Aorta (tissue), 5 donors: ENCODE measurements at regions of chr13 and their contacts with region 1.

Region 1: DNA sequence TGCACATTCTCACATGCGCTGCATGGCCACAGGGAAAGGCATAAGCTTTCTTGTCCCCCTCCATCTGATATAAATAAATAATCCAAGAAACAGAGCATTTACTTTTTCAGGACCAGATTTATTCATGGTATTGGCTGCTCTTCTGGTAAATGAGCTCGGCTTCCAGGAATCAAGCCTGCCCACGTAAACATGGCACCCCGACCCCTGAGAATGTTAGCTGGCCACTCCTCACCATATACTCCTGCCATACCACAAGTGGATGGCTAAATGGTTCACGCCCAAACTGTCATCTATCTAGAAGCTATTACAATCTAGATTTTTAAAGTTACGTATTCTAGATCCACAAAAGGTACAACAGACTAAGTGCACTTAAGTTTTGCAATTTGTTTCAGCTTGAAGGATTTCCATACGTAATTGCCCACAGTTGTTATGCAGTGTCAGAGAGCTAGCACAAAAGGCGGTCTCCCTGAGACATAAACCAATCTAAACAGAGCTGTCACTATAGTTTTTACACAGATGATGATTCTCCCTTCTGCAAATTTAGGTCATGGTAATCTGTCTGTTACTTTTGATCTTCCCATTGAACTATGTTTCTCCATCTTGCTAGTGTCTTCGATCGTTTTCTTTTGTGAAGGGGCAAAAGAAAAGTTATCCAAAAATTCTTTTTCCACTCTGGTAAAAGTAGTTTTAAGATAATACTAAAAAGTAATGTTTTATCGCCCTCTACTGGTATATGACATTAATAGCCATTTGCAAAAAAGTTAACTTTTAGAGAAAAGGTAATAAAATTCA is 16.2 kb upstream of the FOXO1 start:
- DNase-seq: no peak
- ATAC-seq: peak; percentile 76
- H3K4me3 ChIP-seq: no peak overlapping the region
- H3K27ac ChIP-seq: no peak overlapping the region
- H3K4me1 ChIP-seq: no peaks in the 10 kb centered on the region
- H3K27me3 ChIP-seq: no peaks in the 10 kb centered on the region

Region 2: GRCh38 chr13:39684531-39685137 is 998.0 kb before region 1 on chr13:
- intact Hi-C with region 1: loop called in 1 of 2 experiments (anchors 10 kb)
- DNase-seq: no peak
- ATAC-seq: no peak
- H3K4me3 ChIP-seq: no peak overlapping the region
- H3K27ac ChIP-seq: no peak overlapping the region
- H3K4me1 ChIP-seq: no peaks in the 10 kb centered on the region
- H3K27me3 ChIP-seq: no peaks in the 10 kb centered on the region

Region 3: DNA sequence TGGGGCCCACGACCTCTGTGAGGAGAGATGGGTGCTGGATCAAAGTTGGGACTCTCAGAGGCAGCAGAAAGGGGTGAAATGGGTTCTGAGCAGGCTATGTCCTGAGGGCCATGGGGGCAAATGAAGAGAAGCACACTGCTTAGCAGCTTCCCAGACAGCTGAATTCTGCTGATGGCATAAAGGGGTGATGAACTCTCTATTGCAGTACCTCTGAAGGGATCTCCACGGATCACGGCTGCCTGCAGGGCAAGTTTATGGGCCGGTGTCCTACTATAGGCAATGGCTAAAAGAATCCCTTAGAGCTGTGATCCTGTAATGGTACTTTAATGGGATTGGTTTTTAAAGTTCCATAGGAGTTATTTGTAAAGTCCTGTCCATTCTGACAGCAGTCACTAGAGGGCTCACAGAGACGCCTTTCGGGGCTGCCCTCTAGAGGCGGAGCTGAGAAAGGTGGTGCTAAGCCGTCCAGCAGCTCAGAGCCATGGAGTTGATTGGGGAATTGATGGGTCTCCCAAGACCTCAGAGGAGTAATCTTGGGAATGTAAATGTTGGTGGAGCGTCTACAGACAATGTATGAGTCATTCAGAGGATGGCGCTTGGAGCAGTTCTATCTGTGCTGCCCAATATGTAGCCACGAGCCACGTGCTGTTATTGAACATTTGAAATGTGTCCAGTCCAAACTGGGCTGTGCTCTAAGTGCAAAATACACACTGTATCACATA is 739.9 kb before region 1 on chr13:
- intact Hi-C with region 1: loop called (anchors 2 to 10 kb)
- DNase-seq: peak; percentile 72 to 86
- ATAC-seq: peak; percentile 88
- H3K4me3 ChIP-seq: no peak overlapping the region
- H3K27ac ChIP-seq: no peak overlapping the region
- H3K4me1 ChIP-seq: no peaks in the 10 kb centered on the region
- H3K27me3 ChIP-seq: no peaks in the 10 kb centered on the region

Region 4: DNA sequence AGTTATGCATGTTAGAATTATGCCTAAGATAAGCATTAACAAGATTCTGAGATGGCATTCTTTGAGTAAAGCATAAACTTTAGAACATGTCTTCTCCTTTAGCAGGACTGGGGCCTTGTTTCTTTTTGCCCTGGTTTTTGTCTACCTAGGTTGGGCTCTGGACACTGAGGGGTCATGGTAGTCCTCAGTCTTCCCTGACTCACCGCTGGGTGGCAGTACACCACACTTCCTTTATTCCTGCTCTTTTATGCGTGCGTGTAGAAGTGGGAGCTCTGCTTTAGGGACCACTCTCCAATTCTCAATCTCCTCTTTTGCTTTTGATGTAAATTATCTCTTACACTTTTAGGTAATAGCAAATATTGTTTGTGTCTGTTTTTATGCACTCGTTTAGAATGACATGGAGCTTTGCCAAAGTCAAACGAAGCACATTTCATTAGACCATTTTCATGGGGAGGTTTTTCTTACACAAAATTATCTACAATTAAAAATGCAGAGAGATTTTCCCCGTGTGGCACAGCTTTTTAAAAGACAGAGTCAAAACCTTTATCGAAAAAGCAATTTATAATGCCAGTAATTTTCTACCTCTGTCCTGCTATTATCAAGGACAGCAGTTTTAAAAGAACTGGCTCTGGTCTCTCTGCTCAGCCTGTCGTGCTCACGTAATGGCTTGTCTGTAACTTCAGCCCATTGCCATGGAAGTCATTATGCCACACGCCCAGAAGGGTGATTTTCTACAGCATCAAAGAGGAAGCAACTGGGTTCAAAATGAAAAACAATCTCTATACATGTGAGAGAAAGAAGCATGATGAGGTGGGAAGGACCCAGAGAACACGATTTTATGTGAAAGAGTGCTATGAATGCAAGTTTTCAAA is 613.2 kb before region 1 on chr13:
- intact Hi-C with region 1: loop called (anchors 2 kb)
- DNase-seq: peak; percentile 83 to 87
- ATAC-seq: peak; percentile 94
- H3K4me3 ChIP-seq: peak overlapping the region in 1 of 2 donors; percentile 31
- H3K27ac ChIP-seq: no peak overlapping the region
- H3K4me1 ChIP-seq: no peaks in the 10 kb centered on the region
- H3K27me3 ChIP-seq: no peaks in the 10 kb centered on the region